ENCODE measurements at regions of chr5 and their contacts with region 1.

Region 1: DNA sequence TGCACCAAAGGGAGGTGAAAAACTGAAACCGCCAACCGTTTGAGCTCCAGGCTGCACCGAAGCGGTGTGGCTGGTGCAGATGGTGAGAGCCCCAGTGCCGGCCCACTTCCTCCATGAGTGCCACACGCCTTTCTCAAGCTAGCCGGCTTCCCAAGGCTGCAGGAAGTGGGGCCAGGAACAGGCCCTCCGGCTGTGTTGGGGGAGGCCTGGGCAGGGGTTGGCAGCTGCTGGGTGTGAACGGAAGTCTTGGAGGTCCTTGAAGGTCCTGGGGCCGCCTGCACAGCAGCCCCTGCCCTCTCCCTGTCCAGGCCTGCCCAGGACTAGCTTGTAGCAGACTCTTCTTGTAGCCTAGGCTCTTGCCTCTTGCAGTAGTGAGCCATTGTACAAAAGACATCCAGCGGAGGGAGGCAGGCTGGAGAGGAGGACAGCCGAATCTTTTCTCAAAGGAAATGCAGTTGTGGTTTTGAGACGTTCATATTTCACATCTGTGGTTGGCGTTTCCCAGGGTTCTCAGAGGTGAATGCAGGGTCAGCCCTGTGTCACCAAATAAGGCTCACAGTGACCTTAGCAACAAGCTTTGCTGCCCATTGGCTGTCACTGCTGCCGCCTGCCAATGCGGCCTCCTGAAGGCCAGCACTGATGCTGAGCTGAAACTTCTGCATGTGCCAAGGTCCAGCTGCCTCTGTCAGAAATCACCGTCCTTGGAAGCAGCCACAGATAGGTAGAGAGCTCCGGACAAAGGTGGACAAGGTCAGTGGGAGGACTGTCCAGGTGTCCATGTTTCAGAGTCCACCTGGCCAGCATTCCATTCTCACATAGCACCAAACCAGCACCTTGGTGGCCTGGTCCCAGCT is 23.9 kb downstream of the IRF1 start:
- DNase-seq: peak in 8 of 10 donors; percentile 40 to 79 (median 73)
- ATAC-seq: peak; percentile 78 to 79
- H3K4me3 Mint-ChIP-seq: peak overlapping the region; percentile 70 to 83 (median 76)
- H3K27ac Mint-ChIP-seq: peak overlapping the region; percentile 90 to 97 (median 95)
- H3K4me1 Mint-ChIP-seq: peaks cover 48 to 100% (median 96%) of the 10 kb centered on the region in 4 donors
- H3K27me3 Mint-ChIP-seq: no peaks in the 10 kb centered on the region

Region 2: GRCh38 chr5:132419502-132420468 is 46.9 kb before region 1 on chr5:
- POLR2A ChIA-PET with region 1: interaction called, 274 read pairs
- DNase-seq: peak; percentile 27 to 78 (median 60)
- ATAC-seq: peak; percentile 65 to 69
- H3K4me3 Mint-ChIP-seq: peak overlapping the region; percentile 69 to 87 (median 78)
- H3K27ac Mint-ChIP-seq: peak overlapping the region; percentile 85 to 98 (median 94)
- H3K4me1 Mint-ChIP-seq: peaks cover 46 to 100% (median 91%) of the 10 kb centered on the region in 4 donors
- H3K27me3 Mint-ChIP-seq: no peaks in the 10 kb centered on the region

Region 3: GRCh38 chr5:132426525-132427138 is 40.0 kb before region 1 on chr5:
- POLR2A ChIA-PET with region 1: interaction called, 274 read pairs
- DNase-seq: peak in 5 of 10 donors; percentile 31 to 59 (median 36)
- ATAC-seq: peak; percentile 31 to 40
- H3K4me3 Mint-ChIP-seq: peak overlapping the region; percentile 62 to 90 (median 84)
- H3K27ac Mint-ChIP-seq: peak overlapping the region; percentile 95 to 100 (median 98)
- H3K4me1 Mint-ChIP-seq: peaks cover 51 to 100% (median 98%) of the 10 kb centered on the region in 4 donors
- H3K27me3 Mint-ChIP-seq: no peaks in the 10 kb centered on the region

Region 4: GRCh38 chr5:132437604-132438266 is 28.9 kb before region 1 on chr5:
- POLR2A ChIA-PET with region 1: interaction called, 274 read pairs
- DNase-seq: peak; percentile 29 to 82 (median 52)
- ATAC-seq: peak; percentile 90 to 93
- H3K4me3 Mint-ChIP-seq: peak overlapping the region; percentile 38 to 77 (median 68)
- H3K27ac Mint-ChIP-seq: peak overlapping the region; percentile 84 to 94 (median 90)
- H3K4me1 Mint-ChIP-seq: peaks cover 47 to 95% (median 87%) of the 10 kb centered on the region in 4 donors
- H3K27me3 Mint-ChIP-seq: no peaks in the 10 kb centered on the region

Measured in naive thymus-derived CD8-positive, alpha-beta T cell (primary cell).